Vagina (tissue), 2 donors: ENCODE measurements at regions of chr17 and their contacts with region 1.

Region 1: GRCh38 chr17:7004398-7005253 is 7.8 kb upstream of the RNASEK start:
- DNase-seq: no peak
- H3K4me3 ChIP-seq: no peak overlapping the region
- H3K27ac ChIP-seq: no peak overlapping the region
- H3K4me1 ChIP-seq: peaks cover 4% of the 10 kb centered on the region
- H3K27me3 ChIP-seq: no peaks in the 10 kb centered on the region
- CTCF ChIP-seq: peak; percentile 57 to 76 (median 70)
- POLR2A ChIP-seq: no peak

Region 2: GRCh38 chr17:5747271-5747670 is 1257.4 kb before region 1 on chr17:
- intact Hi-C with region 1: no loop called
- DNase-seq: no peak
- H3K4me3 ChIP-seq: no peak overlapping the region
- H3K27ac ChIP-seq: no peak overlapping the region
- H3K4me1 ChIP-seq: no peaks in the 10 kb centered on the region
- H3K27me3 ChIP-seq: no peaks in the 10 kb centered on the region
- CTCF ChIP-seq: no peak
- POLR2A ChIP-seq: no peak

Region 3: GRCh38 chr17:6666077-6666521 is 338.5 kb before region 1 on chr17:
- intact Hi-C with region 1: loop called (anchors 10 kb)
- DNase-seq: peak; percentile 87 to 95
- H3K4me3 ChIP-seq: no peak overlapping the region
- H3K27ac ChIP-seq: no peak overlapping the region
- H3K4me1 ChIP-seq: no peaks in the 10 kb centered on the region
- H3K27me3 ChIP-seq: no peaks in the 10 kb centered on the region
- CTCF ChIP-seq: peak; percentile 59 to 86 (median 72)
- POLR2A ChIP-seq: no peak

Region 4: DNA sequence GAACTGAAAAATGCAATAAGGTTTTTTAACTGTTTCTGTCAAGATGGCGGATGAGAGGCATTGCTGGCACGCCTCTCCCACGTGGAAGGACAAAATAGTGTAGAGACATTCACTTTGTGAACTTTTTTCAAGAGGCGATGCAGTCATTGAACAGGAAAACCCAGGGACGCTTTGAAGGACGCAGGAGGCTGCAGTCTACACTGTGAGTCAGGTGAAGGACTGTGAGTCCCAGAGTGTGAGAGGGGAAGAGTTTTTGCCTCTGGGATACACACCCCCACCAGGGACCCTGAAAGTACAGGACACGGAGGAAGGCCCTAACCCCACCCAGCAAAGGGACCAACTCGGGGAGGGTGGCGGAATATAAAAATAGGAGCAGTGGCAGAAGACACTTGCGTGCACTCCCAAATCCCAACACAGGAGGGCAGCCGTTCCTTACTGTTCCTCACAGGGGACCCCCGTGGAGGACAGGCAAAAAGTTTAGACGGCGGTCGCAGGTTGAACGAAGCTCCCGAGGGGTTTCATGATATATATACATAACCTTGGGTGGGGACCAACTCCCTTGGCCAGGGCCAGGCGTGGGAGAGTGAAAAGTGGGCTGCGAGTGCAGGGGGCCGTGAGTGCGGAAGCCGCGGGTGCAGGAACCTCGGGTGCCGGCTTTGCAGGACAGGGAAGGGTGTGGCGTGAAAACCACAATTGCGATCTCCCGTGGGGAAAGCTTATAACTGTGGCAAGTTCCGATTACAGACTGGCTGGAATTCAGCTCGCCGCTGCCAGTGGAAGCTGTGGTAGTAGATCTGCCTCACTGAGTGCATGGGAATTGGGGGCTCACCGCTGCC is 90.8 kb before region 1 on chr17:
- intact Hi-C with region 1: loop called (anchors 2 kb)
- DNase-seq: no peak
- H3K4me3 ChIP-seq: peak overlapping the region; percentile 19 to 20
- H3K27ac ChIP-seq: no peak overlapping the region
- H3K4me1 ChIP-seq: peaks cover 9% of the 10 kb centered on the region
- H3K27me3 ChIP-seq: no peaks in the 10 kb centered on the region
- CTCF ChIP-seq: peak; percentile 65 to 84 (median 68)
- POLR2A ChIP-seq: no peak

Region 5: DNA sequence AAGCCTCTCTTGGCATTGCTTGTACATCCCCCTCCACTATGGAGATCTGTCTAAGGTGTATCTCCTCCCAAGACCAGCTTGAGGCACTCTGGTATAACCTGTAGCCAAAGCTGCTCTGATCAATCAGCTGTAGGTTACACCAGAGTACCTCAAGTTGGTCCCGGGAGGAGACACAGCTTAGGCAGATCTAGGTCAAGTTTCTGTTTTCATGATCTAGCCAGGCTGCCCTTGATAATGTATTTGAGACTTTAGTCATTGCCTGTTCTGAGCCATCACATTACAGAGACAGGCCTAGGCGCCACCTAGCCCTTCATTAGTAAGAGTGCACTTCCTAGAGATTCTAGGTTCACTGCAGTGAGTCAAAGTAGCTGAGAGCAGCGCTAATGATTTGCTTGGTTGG is 143.1 kb after region 1 on chr17:
- intact Hi-C with region 1: no loop called
- DNase-seq: no peak
- H3K4me3 ChIP-seq: no peak overlapping the region
- H3K27ac ChIP-seq: no peak overlapping the region
- H3K4me1 ChIP-seq: no peaks in the 10 kb centered on the region
- H3K27me3 ChIP-seq: no peaks in the 10 kb centered on the region
- CTCF ChIP-seq: no peak
- POLR2A ChIP-seq: no peak